ENCODE measurements at regions of chr1 and their contacts with region 1.

Region 1: DNA sequence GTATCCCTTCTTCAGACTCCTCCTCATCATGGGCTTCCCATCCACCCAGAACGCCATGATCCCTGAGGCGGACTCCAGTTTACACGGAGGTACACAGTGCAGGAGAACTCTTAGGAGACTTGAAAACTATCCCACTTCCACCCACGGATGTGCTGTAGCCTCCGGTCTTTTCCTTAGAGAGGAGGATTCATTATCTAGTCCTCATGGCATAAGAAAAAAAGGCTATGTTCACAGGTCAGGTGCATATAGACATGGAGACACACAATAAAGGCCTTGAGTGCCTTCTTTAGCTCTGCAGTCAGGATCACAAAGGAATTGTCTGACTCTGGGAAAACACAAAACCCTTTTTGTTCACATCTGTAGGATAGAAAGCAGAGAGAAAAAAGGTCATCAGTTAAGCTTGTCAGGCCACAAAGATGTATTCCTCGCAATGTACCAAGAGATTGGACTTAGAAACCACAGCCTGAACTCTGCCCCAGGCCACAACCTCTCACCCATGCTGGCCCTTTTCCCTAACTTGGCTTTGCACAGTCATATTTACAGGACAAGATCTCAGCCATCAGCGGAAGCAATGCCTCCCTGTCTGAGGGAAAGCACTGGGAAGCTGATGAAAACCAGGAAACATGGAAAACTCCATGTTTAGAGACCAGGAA is 9.0 kb downstream of the CRP start:
- DNase-seq: no peak
- H3K4me3 ChIP-seq: no peak overlapping the region
- CTCF ChIP-seq: no peak

Region 2: GRCh38 chr1:159370855-159371254 is 334.5 kb before region 1 on chr1:
- in situ Hi-C with region 1: loop called (anchors 25 kb)
- DNase-seq: no peak
- H3K4me3 ChIP-seq: no peak overlapping the region
- CTCF ChIP-seq: no peak

Region 3: GRCh38 chr1:159492575-159493323 is 212.6 kb before region 1 on chr1:
- in situ Hi-C with region 1: loop called (anchors 25 kb)
- DNase-seq: peak; percentile 12
- H3K4me3 ChIP-seq: no peak overlapping the region
- CTCF ChIP-seq: no peak

Measured in astrocyte of the cerebellum (primary cell).